BJ (cell line): ENCODE measurements at regions of chr15 and their contacts with region 1.

Region 1: GRCh38 chr15:89912674-89913396 is at the start of gene ARPIN:
- DNase-seq: no peak
- H3K4me3 ChIP-seq: peak within 1 kb of the TSS; percentile 77
- H3K27me3 ChIP-seq: no peaks in the 10 kb centered on the region
- CTCF ChIP-seq: no peak
- polyA plus RNA-seq, gene ARPIN: 10.0 and 11.2 TPM in 2 replicates

Region 2: DNA sequence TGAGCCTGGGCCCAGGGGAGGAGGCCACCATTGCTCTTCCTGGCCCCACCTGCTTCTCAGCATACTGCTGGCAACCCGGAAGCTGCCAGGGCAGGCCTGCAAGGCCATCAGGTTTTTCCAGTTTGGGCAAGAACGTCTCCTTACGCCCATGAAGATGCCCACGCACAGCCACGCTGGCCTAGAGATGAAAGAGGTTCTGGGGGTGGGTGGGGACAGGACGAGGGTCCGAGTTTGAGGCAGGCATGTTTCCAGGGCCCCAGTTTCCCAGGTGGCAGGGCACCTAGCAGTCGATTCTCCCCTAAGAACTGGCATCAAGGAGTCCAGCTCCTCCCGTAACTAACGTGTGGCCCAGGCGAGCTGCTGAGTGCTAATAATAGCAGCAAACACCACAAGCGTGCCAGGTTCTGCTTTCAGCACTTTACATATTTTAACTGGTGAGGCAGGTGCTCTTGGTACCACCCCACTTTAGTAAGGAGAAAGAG is 134.1 kb after region 1 on chr15:
- CTCF ChIA-PET with region 1: no interaction called
- POLR2A ChIA-PET with region 1: no interaction called
- DNase-seq: no peak
- H3K4me3 ChIP-seq: no peak overlapping the region
- H3K27me3 ChIP-seq: no peaks in the 10 kb centered on the region
- CTCF ChIP-seq: no peak

Region 3: DNA sequence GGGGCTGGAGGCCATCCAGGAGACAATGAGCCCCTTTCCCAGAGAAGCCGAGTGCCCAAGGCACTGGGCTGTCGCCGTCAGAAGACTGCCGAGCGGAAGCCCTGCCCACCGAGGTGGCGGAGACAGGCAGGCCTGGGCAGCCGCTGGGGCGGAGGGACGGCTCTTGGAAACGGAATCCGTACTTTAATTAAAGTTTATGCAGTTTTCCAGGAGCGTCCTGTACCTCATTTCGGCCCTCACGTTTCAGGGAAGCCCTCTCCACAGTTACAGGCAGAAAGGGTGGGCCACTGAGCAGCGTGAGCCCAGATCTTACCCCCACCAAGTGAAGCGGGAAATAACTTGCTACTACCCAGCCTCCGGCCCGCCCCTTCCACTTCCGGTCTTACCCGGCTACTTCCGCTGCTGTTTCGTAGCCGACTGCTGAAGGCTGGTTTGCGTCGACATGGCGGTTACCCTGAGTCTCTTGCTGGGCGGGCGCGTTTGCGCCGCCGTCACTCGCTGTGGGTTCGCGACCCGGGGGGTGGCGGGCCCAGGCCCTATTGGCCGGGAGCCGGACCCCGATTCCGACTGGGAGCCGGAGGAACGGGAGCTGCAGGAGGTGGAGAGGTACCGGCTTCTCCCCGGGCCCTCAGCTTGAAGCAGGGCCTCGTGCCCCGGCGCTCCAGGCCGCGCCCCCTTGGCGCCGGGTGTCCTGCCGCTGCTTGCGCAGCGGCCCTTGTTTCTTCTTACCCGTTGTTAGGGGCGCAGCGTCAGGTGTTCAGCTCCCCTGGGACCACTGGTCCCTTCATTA is 352.6 kb after region 1 on chr15 and contains the start of gene NGRN:
- CTCF ChIA-PET with region 1: no interaction called
- POLR2A ChIA-PET with region 1: interaction called, 10 read pairs
- DNase-seq: peak; percentile 59
- H3K4me3 ChIP-seq: peak within 1 kb of the TSS; percentile 74
- H3K27me3 ChIP-seq: no peaks in the 10 kb centered on the region
- CTCF ChIP-seq: no peak
- polyA plus RNA-seq, gene NGRN: 63.5 and 76.8 TPM in 2 replicates